Naive thymus-derived CD4-positive, alpha-beta T cell (primary cell): ENCODE measurements at regions of chr16 and their contacts with region 1.

Region 1: GRCh38 chr16:80718249-80719220 is 85.9 kb downstream of the CDYL2 start:
- DNase-seq: no peak
- ATAC-seq: no peak
- H3K4me3 ChIP-seq: no peak overlapping the region
- H3K4me3 Mint-ChIP-seq: no peak overlapping the region
- H3K27ac ChIP-seq: no peak overlapping the region
- H3K27ac Mint-ChIP-seq: peak overlapping the region in 1 of 9 donors; percentile 38
- H3K4me1 ChIP-seq: peaks cover 8 to 14% of the 10 kb centered on the region in 2 donors
- H3K4me1 Mint-ChIP-seq: peaks cover 3 to 20% (median 11%) of the 10 kb centered on the region in 7 donors
- H3K27me3 ChIP-seq: no peaks in the 10 kb centered on the region
- H3K27me3 Mint-ChIP-seq: no peaks in the 10 kb centered on the region

Region 2: DNA sequence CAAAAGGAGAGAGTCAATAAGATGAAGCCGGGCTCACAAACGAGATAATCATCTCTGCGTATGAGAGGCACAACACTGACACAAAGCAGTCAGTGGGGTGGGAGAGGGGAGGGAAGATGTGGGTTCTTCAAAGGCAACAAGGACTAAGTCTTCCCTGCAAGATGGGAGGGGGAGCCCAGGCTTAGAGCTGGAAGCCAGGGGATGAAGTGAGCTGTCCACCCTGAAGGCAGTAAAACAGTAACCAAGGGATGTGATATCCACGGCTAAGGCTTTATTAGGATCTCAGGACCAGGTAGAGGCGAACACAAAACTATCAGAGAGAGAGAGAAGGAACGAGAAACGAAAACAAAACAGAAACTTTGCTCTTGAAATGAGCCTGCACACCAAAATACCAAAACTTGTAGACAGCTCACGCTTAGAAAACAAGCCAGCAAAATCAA is 61.8 kb before region 1 on chr16:
- CTCF ChIA-PET with region 1: no interaction called
- POLR2A ChIA-PET with region 1: no interaction called
- intact Hi-C with region 1: loop called in 1 of 2 experiments (anchors 10 kb)
- DNase-seq: peak in 8 of 9 donors; percentile 25 to 60 (median 48)
- ATAC-seq: peak; percentile 85
- H3K4me3 ChIP-seq: peak overlapping the region; percentile 56
- H3K4me3 Mint-ChIP-seq: peak overlapping the region; percentile 71 to 92 (median 87)
- H3K27ac ChIP-seq: peak overlapping the region; percentile 68
- H3K27ac Mint-ChIP-seq: peak overlapping the region; percentile 80 to 97 (median 91)
- H3K4me1 ChIP-seq: peaks cover 6 to 14% of the 10 kb centered on the region in 2 donors
- H3K4me1 Mint-ChIP-seq: peaks cover 18 to 47% (median 28%) of the 10 kb centered on the region in 7 donors
- H3K27me3 ChIP-seq: no peaks in the 10 kb centered on the region
- H3K27me3 Mint-ChIP-seq: no peaks in the 10 kb centered on the region